Mammary epithelial cell (primary cell): ENCODE measurements at regions of chr9 and their contacts with region 1.

Region 1: GRCh38 chr9:119365291-119366027 is 3.8 kb downstream of the BRINP1 start:
- DNase-seq: peak; percentile 40
- H3K4me3 ChIP-seq: no peak overlapping the region
- H3K27ac ChIP-seq: no peak overlapping the region
- H3K4me1 ChIP-seq: peaks cover 8% of the 10 kb centered on the region
- H3K27me3 ChIP-seq: peaks cover 9% of the 10 kb centered on the region
- CTCF ChIP-seq: peak; percentile 59 to 83

Region 2: DNA sequence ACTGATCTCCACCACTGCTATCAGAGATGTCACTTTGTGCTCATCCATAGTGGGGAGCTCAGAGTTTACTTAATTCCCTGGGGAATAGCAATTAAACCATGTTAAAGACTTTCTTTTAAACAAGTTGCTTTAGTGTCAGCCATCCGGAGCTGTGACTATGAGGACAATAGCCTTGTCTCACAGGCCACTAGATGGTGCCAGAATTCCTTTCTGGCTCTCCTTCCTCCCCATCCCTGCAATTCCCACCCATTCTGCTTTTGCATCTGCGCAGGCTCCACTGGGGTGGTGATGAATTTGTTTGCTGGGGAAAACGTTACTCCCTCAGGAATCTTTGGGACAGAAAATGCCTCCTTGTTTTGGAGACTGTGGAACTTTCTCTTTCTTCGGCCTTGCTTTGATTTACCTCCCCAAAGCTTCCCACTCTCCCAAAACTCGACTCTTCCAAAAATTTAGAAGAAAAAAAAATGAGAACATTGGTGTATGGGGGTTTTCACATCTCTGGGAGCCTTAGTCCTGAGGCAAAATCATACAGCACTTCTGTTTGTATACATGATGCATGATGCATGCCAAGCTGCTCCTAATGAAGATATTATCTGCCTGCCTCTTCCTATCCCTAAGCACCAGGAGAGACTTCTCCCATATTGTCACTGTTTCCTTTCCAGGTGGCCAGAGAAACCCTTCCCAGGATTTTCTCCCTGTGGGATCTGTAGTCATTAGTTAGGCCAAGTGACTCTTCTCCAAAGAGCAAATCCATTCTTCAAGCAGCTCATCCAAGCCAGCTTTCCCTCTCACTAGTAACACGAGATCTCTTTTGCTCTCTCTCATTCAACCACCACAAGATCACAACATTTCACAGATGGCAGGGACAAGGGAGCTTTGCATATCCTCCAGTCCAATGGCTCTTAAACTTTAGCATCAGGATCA is 1195.2 kb before region 1 on chr9:
- CTCF ChIA-PET with region 1: no interaction called
- dilution Hi-C with region 1: no loop called
- in situ Hi-C with region 1: no loop called
- intact Hi-C with region 1: loop called (anchors 1 kb)
- DNase-seq: peak; percentile 53
- H3K4me3 ChIP-seq: no peak overlapping the region
- H3K27ac ChIP-seq: no peak overlapping the region
- H3K4me1 ChIP-seq: no peaks in the 10 kb centered on the region
- H3K27me3 ChIP-seq: no peaks in the 10 kb centered on the region
- CTCF ChIP-seq: peak; percentile 87 to 91

Region 3: GRCh38 chr9:118652912-118653311 is 712.5 kb before region 1 on chr9:
- CTCF ChIA-PET with region 1: no interaction called
- dilution Hi-C with region 1: no loop called
- in situ Hi-C with region 1: no loop called
- intact Hi-C with region 1: loop called (anchors 10 kb)
- DNase-seq: peak; percentile 57
- H3K4me3 ChIP-seq: no peak overlapping the region
- H3K27ac ChIP-seq: no peak overlapping the region
- H3K4me1 ChIP-seq: peaks cover 16% of the 10 kb centered on the region
- H3K27me3 ChIP-seq: no peaks in the 10 kb centered on the region
- CTCF ChIP-seq: no peak

Region 4: GRCh38 chr9:118829334-118829733 is 536.1 kb before region 1 on chr9:
- CTCF ChIA-PET with region 1: interaction called, 5 read pairs
- dilution Hi-C with region 1: no loop called
- in situ Hi-C with region 1: no loop called
- intact Hi-C with region 1: loop called (anchors 1 kb)
- DNase-seq: peak; percentile 22
- H3K4me3 ChIP-seq: no peak overlapping the region
- H3K27ac ChIP-seq: no peak overlapping the region
- H3K4me1 ChIP-seq: no peaks in the 10 kb centered on the region
- H3K27me3 ChIP-seq: no peaks in the 10 kb centered on the region
- CTCF ChIP-seq: no peak

Region 5: GRCh38 chr9:119289740-119290433 is 75.6 kb before region 1 on chr9:
- CTCF ChIA-PET with region 1: no interaction called
- dilution Hi-C with region 1: no loop called
- in situ Hi-C with region 1: no loop called
- intact Hi-C with region 1: loop called (anchors 1 kb)
- DNase-seq: peak; percentile 50
- H3K4me3 ChIP-seq: no peak overlapping the region
- H3K27ac ChIP-seq: no peak overlapping the region
- H3K4me1 ChIP-seq: no peaks in the 10 kb centered on the region
- H3K27me3 ChIP-seq: no peaks in the 10 kb centered on the region
- CTCF ChIP-seq: peak; percentile 49 to 66

Region 6: GRCh38 chr9:119597499-119597898 is 232.0 kb after region 1 on chr9:
- CTCF ChIA-PET with region 1: no interaction called
- dilution Hi-C with region 1: no loop called
- in situ Hi-C with region 1: no loop called
- intact Hi-C with region 1: no loop called
- DNase-seq: no peak
- H3K4me3 ChIP-seq: no peak overlapping the region
- H3K27ac ChIP-seq: no peak overlapping the region
- H3K4me1 ChIP-seq: no peaks in the 10 kb centered on the region
- H3K27me3 ChIP-seq: no peaks in the 10 kb centered on the region
- CTCF ChIP-seq: no peak